ENCODE measurements at regions of chr11 and their contacts with region 1.

Region 1: GRCh38 chr11:61187505-61188130 is 15.7 kb upstream of the PGA3 start:
- DNase-seq: no peak
- H3K4me3 ChIP-seq: no peak overlapping the region
- H3K27ac ChIP-seq: no peak overlapping the region
- H3K4me1 ChIP-seq: no peaks in the 10 kb centered on the region
- H3K27me3 ChIP-seq: peaks cover 0 to 14% (median 0%) of the 10 kb centered on the region in 4 donors
- CTCF ChIP-seq: peak; percentile 85 to 93 (median 90)
- POLR2A ChIP-seq: no peak

Region 2: GRCh38 chr11:60821827-60822599 is 365.6 kb before region 1 on chr11:
- intact Hi-C with region 1: loop called (anchors 10 kb)
- DNase-seq: no peak
- H3K4me3 ChIP-seq: no peak overlapping the region
- H3K27ac ChIP-seq: no peak overlapping the region
- H3K4me1 ChIP-seq: no peaks in the 10 kb centered on the region
- H3K27me3 ChIP-seq: no peaks in the 10 kb centered on the region
- CTCF ChIP-seq: no peak
- POLR2A ChIP-seq: no peak

Region 3: DNA sequence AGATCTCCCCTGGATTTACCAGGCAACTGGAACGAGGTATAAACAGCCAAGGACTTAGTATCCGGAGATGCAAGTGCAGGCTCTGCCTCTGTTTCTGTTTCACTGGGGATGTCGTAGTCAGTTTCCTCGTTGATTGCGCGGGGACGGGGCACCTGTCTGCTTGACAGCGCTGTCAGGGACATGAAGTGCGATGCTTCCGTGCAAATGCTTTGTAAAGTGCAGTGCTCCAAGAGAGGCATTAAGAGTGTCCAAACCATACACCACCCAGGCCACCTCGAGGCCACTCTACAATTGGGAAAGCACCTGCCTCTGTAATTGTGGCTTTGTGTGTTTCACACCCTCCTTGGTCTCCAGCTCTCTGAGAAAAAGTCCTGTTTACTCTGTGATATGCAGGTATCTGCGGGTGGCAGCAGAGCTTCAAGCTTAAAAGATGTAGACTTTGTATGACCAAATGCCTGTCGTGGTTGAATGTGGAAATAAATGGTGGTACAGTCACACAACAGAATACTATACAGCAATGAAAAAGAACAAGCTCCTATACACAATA is 103.9 kb before region 1 on chr11:
- intact Hi-C with region 1: no loop called
- DNase-seq: no peak
- H3K4me3 ChIP-seq: no peak overlapping the region
- H3K27ac ChIP-seq: peak overlapping the region in 1 of 4 donors; percentile 44
- H3K4me1 ChIP-seq: peaks cover 0 to 8% (median 0%) of the 10 kb centered on the region in 3 donors
- H3K27me3 ChIP-seq: peaks cover 0 to 15% (median 0%) of the 10 kb centered on the region in 4 donors
- CTCF ChIP-seq: no peak
- POLR2A ChIP-seq: no peak

Region 4: DNA sequence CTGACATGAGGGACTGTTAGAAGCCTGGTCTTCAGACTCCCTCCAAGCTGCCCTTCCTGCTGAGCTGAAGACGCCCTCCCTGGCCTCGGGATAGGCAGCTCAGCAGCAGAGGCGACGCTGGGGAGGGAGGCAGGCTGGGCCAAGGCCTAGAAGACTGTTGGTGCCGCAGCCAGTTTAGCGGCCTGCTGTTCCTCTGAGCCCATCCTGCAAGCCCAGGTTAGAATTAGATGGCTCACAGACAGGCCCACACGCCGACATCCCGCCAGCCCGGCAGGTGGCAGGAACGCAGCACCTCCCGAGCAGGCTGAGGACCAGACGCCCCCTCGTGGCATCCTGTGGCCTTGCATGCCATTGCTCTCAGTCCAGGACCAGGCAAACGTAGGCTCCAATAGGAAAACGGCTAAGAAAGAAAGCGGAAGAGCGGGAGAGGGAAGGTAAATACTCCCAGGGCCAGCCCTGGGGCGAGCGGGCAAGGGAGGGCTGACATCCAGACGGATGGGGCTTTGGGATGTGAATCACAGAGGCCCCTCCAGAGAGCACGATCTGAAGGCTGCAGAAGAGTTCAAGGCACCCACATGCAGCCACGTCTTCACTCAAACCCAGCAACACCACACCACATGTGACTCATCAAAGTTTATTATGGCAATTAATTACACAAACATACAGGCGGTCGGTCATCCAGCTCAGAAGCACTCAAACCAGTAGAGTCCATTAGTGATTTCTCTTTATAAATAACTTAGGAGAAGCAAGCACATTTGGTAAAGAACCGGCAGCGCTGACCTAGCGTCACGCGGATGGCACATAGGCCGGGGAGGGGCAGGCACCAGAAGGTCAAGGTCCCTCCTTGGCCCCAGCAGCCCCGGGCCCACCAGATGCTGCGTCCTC is 57.7 kb before region 1 on chr11:
- intact Hi-C with region 1: loop called (anchors 10 kb)
- DNase-seq: no peak
- H3K4me3 ChIP-seq: peak overlapping the region in 3 of 4 donors; percentile 19 to 52 (median 32)
- H3K27ac ChIP-seq: peak overlapping the region; percentile 64 to 78 (median 68)
- H3K4me1 ChIP-seq: peaks cover 6 to 16% (median 10%) of the 10 kb centered on the region in 3 donors
- H3K27me3 ChIP-seq: no peaks in the 10 kb centered on the region
- CTCF ChIP-seq: peak; percentile 99 to 100 (median 100)
- POLR2A ChIP-seq: no peak

Region 5: DNA sequence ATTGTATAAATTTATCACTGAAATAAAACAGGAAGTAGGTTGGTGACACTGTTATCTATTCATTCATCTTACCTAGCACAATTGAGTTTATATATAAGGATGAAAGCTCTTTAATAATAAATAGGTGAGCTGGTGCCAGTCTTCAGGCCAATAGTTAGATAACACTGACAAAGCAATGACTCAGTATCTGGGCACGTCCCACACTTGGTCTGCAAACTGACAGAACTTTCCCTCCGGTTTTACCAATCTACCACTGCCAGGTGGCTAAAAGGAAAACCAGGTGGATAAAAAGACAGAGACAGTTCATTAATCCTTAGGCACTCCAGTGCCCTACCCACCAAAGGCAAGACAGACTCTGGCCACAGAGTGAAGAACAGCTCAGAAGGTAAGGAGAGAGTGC is 127.6 kb after region 1 on chr11:
- intact Hi-C with region 1: no loop called
- DNase-seq: no peak
- H3K4me3 ChIP-seq: no peak overlapping the region
- H3K27ac ChIP-seq: no peak overlapping the region
- H3K4me1 ChIP-seq: no peaks in the 10 kb centered on the region
- H3K27me3 ChIP-seq: no peaks in the 10 kb centered on the region
- CTCF ChIP-seq: no peak
- POLR2A ChIP-seq: no peak

Measured in esophagus squamous epithelium (tissue), 5 donors.